ENCODE measurements at regions of chr20 and their contacts with region 1.

Region 1: GRCh38 chr20:54848206-54848605 is 372.8 kb downstream of the DOK5 start:
- DNase-seq: no peak
- ATAC-seq: no peak
- H3K4me3 ChIP-seq: no peak overlapping the region
- H3K4me3 Mint-ChIP-seq: no peak overlapping the region
- H3K27ac ChIP-seq: no peak overlapping the region
- H3K27ac Mint-ChIP-seq: no peak overlapping the region
- H3K4me1 ChIP-seq: no peaks in the 10 kb centered on the region
- H3K4me1 Mint-ChIP-seq: no peaks in the 10 kb centered on the region
- H3K27me3 ChIP-seq: no peaks in the 10 kb centered on the region
- H3K27me3 Mint-ChIP-seq: peaks cover 0 to 2% of the 10 kb centered on the region in 2 donors

Region 2: DNA sequence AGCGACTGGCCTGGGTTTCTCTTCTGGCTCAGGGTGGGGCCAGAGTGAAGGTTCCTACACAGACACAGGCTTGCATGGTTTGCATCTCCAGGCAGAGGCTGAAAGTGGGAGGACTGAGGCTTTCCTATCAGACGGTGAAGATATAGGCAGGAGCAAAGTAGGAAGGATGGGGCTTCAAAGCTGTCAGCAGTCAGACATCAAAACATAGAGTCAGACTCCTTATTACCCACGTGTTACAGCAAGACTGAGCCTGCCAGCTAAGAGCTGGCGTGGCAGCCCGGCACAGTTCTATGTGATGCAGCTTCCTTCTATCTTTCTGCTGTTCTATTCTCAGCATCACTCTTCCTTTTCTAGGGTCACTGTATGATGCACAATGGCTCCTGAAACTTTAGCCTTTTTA is 72.3 kb after region 1 on chr20:
- CTCF ChIA-PET with region 1: no interaction called
- POLR2A ChIA-PET with region 1: interaction called in 1 of 2 experiments, 10 read pairs
- DNase-seq: no peak
- ATAC-seq: no peak
- H3K4me3 ChIP-seq: no peak overlapping the region
- H3K4me3 Mint-ChIP-seq: no peak overlapping the region
- H3K27ac ChIP-seq: no peak overlapping the region
- H3K27ac Mint-ChIP-seq: no peak overlapping the region
- H3K4me1 ChIP-seq: no peaks in the 10 kb centered on the region
- H3K4me1 Mint-ChIP-seq: no peaks in the 10 kb centered on the region
- H3K27me3 ChIP-seq: no peaks in the 10 kb centered on the region
- H3K27me3 Mint-ChIP-seq: no peaks in the 10 kb centered on the region